K562 (cell line): ENCODE measurements at regions of chr4 and their contacts with region 1.

Region 1: DNA sequence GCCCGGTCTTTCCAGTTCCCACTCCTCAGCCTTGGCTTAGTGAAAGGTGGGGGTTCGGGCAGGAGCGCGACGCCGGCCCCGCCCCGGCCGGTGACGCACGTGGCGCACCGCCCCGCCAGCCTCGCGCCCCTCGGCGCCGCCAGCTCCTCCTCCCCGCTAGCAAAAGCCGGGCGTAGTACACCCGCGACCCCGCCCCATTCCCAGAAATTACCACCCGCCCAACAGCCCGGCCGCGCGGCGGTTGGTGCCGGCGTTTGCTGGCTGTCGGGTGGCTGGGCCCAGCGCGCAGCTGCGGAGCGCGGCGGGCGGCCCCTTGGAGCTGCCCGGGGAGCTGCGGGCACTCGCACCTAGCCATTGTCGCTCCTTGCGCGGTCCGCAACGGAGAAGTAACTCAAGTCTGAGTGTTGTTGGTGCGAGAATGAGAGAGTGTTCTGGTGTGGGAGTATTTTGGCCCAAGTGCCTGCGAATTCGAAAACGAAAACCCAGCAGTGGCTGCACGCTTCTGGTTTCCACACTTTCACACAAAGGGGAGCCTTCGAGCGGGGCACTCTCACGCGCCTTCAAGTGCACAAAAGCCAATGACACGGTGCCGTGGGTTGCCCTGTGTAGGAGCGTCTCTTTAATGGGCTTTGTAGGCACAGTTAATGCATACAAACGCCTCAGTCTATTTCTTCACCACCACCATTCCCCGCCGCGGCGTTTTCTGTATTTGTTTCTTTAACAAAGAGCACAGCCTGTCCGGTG is 1.0 kb upstream of the ELF2 start:
- DNase-seq: peak; percentile 89 to 96 (median 90)
- ATAC-seq: peak; percentile 76
- H3K4me3 ChIP-seq: peak overlapping the region; percentile 98
- H3K27ac ChIP-seq: peak overlapping the region; percentile 98
- H3K4me1 ChIP-seq: peaks cover 17 to 23% of the 10 kb centered on the region in 2 experiments; a peak in 4 of 5 replicates
- H3K27me3 ChIP-seq: no peaks in the 10 kb centered on the region
- CTCF ChIP-seq: no peak
- EP300 ChIP-seq: peak; percentile 63; the same call in 1 of the 2 replicates
- POLR2A ChIP-seq: peak; percentile 93
- RAD21 ChIP-seq: no peak

Region 2: GRCh38 chr4:138494931-138495330 is 683.1 kb before region 1 on chr4:
- CTCF ChIA-PET with region 1: no interaction called
- POLR2A ChIA-PET with region 1: no interaction called
- in situ Hi-C with region 1: no loop called
- intact Hi-C with region 1: no loop called
- DNase-seq: peak in 1 of 4 experiments; percentile 11
- ATAC-seq: peak; percentile 91
- H3K4me3 ChIP-seq: no peak overlapping the region
- H3K27ac ChIP-seq: no peak overlapping the region
- H3K4me1 ChIP-seq: no peaks in the 10 kb centered on the region
- H3K27me3 ChIP-seq: no peaks in the 10 kb centered on the region
- CTCF ChIP-seq: peak; percentile 16 to 26 (median 18); a peak in 2 of 6 replicates
- EP300 ChIP-seq: no peak
- POLR2A ChIP-seq: no peak
- RAD21 ChIP-seq: no peak

Region 3: DNA sequence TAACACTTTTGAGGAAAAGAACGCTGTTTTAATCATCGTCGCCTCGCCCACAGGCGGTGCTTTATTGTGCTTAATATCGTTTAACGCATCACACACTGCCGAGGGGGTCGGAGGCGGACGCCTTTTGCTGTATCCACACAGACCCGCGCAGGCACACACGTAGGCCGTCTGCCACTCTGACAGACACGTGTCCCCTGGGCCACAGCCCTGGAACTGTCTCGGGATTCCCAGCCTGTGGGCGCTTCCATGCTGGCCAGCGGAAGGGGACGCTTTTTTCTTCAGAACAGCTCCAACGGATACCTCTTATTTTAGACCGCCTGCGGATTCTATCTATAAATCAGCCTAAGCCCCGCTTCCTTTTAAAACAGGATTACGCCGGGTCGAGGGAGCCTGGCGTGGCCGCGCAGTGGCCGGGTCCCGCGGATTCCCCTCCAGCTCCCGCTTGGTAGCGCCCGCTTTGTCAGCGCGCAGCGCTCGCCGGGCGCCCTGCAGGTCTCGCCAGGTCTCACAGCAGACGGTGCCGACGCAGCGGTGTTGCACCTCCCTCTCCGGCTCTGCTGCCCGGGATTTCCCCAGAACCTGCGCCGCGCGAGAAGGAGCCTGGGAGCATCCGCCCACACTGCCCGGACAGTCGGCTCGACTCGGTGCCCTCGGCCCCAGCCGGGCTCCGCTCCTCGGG is 162.6 kb before region 1 on chr4 and contains the start of gene NOCT:
- CTCF ChIA-PET with region 1: no interaction called
- POLR2A ChIA-PET with region 1: interaction called, 4 read pairs
- in situ Hi-C with region 1: no loop called
- intact Hi-C with region 1: loop called (anchors 5 kb)
- DNase-seq: peak; percentile 86 to 92 (median 88)
- ATAC-seq: peak; percentile 94
- H3K4me3 ChIP-seq: peak within 1 kb of the TSS; percentile 92
- H3K27ac ChIP-seq: peak within 1 kb of the TSS; percentile 92
- H3K4me1 ChIP-seq: peaks cover 24 to 32% of the 10 kb centered on the region in 2 experiments; a peak in 4 of 5 replicates
- H3K27me3 ChIP-seq: no peaks in the 10 kb centered on the region
- CTCF ChIP-seq: peak in 1 of 3 experiments; percentile 4; a peak in 1 of 6 replicates
- EP300 ChIP-seq: no peak; the same call in 1 of the 2 replicates
- POLR2A ChIP-seq: peak; percentile 91
- RAD21 ChIP-seq: no peak
- polyA plus RNA-seq, gene NOCT: 1.3 to 2.8 TPM

Region 4: GRCh38 chr4:139083956-139084803 is 93.9 kb before region 1 on chr4:
- CTCF ChIA-PET with region 1: no interaction called
- POLR2A ChIA-PET with region 1: interaction called, 3 read pairs
- in situ Hi-C with region 1: no loop called
- intact Hi-C with region 1: loop called (anchors 5 kb)
- DNase-seq: peak; percentile 70 to 92 (median 75)
- ATAC-seq: peak; percentile 72
- H3K4me3 ChIP-seq: peak overlapping the region; percentile 85
- H3K27ac ChIP-seq: peak overlapping the region; percentile 98
- H3K4me1 ChIP-seq: peaks cover 6 to 8% of the 10 kb centered on the region in 2 experiments; a peak in 4 of 5 replicates
- H3K27me3 ChIP-seq: no peaks in the 10 kb centered on the region
- CTCF ChIP-seq: peak in 2 of 3 experiments; percentile 16 to 46; a peak in 2 of 6 replicates
- EP300 ChIP-seq: no peak
- POLR2A ChIP-seq: peak; percentile 85
- RAD21 ChIP-seq: no peak

Region 5: GRCh38 chr4:139099366-139099982 is 78.6 kb before region 1 on chr4:
- CTCF ChIA-PET with region 1: interaction called, 5 read pairs
- POLR2A ChIA-PET with region 1: interaction called, 3 read pairs
- in situ Hi-C with region 1: no loop called
- intact Hi-C with region 1: loop called (anchors 2 kb)
- DNase-seq: peak; percentile 70 to 90 (median 71)
- ATAC-seq: peak; percentile 95
- H3K4me3 ChIP-seq: no peak overlapping the region
- H3K27ac ChIP-seq: no peak overlapping the region
- H3K4me1 ChIP-seq: no peaks in the 10 kb centered on the region; a peak in 1 of 5 replicates
- H3K27me3 ChIP-seq: no peaks in the 10 kb centered on the region
- CTCF ChIP-seq: peak; percentile 81 to 92 (median 84)
- EP300 ChIP-seq: no peak
- POLR2A ChIP-seq: no peak
- RAD21 ChIP-seq: peak; percentile 82 to 91

Region 6: DNA sequence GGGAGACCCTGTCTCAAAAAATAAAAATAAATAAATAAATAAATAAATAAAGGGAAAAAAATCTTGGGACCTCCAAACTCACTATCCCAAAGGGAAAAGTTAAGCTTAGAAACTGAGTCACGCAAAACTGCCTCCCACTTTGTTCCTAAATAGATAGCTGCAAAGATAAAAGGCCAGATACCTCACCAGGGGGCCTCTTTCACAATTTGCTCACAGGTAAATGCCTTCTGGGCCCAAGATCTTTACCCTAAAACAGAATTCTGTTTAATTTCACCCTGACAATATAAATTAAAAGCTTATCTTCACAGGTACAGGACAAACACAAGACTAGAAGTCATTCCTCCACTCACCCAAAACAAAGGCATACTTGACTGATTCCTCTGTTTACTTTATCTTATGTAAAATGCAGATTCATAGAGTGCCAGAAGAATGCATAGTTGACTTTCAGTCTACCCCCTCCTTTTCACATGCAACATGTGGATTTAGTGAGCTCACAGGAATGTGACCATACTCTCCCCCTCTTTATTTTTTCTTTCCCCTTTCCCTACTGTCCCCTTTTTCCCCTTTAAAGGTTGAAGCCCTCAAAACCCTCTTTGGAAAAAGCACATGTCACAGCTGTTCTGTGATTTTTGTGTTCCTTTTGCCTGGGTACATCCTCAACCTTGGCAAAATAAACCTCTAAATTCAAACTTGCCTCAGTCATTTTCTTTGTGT is 24.5 kb before region 1 on chr4:
- CTCF ChIA-PET with region 1: no interaction called
- POLR2A ChIA-PET with region 1: interaction called, 17 read pairs
- in situ Hi-C with region 1: no loop called
- intact Hi-C with region 1: no loop called
- DNase-seq: no peak
- ATAC-seq: peak; percentile 54
- H3K4me3 ChIP-seq: no peak overlapping the region
- H3K27ac ChIP-seq: peak overlapping the region; percentile 55; the same call in 1 of the 3 replicates
- H3K4me1 ChIP-seq: peaks cover 17 to 19% of the 10 kb centered on the region in 2 experiments; a peak in 4 of 5 replicates
- H3K27me3 ChIP-seq: no peaks in the 10 kb centered on the region
- CTCF ChIP-seq: no peak
- EP300 ChIP-seq: no peak
- POLR2A ChIP-seq: no peak
- RAD21 ChIP-seq: no peak

Region 7: GRCh38 chr4:139214039-139214534 is 36.0 kb after region 1 on chr4:
- CTCF ChIA-PET with region 1: no interaction called
- POLR2A ChIA-PET with region 1: interaction called, 4 read pairs
- in situ Hi-C with region 1: no loop called
- intact Hi-C with region 1: loop called (anchors 5 kb)
- DNase-seq: peak in 3 of 4 experiments; percentile 16 to 80 (median 70)
- ATAC-seq: peak; percentile 96
- H3K4me3 ChIP-seq: no peak overlapping the region
- H3K27ac ChIP-seq: peak overlapping the region; percentile 66; the same call in 2 of the 3 replicates
- H3K4me1 ChIP-seq: peaks cover 8 to 21% of the 10 kb centered on the region in 2 experiments
- H3K27me3 ChIP-seq: no peaks in the 10 kb centered on the region
- CTCF ChIP-seq: no peak
- EP300 ChIP-seq: peak; percentile 65
- POLR2A ChIP-seq: no peak
- RAD21 ChIP-seq: no peak

Region 8: GRCh38 chr4:139301113-139301820 is 123.2 kb after region 1 on chr4 and contains the start of gene NAA15:
- CTCF ChIA-PET with region 1: no interaction called
- POLR2A ChIA-PET with region 1: interaction called, 9 read pairs
- in situ Hi-C with region 1: no loop called
- intact Hi-C with region 1: loop called (anchors 2 kb)
- DNase-seq: peak; percentile 94 to 99 (median 96)
- ATAC-seq: peak; percentile 87
- H3K4me3 ChIP-seq: peak within 1 kb of the TSS; percentile 99
- H3K27ac ChIP-seq: peak within 1 kb of the TSS; percentile 98
- H3K4me1 ChIP-seq: peaks cover 11 to 12% of the 10 kb centered on the region in 2 experiments
- H3K27me3 ChIP-seq: no peaks in the 10 kb centered on the region
- CTCF ChIP-seq: no peak
- EP300 ChIP-seq: no peak
- POLR2A ChIP-seq: peak; percentile 94
- RAD21 ChIP-seq: no peak
- polyA plus RNA-seq, gene NAA15: 37.8 to 41.3 TPM

Region 9: DNA sequence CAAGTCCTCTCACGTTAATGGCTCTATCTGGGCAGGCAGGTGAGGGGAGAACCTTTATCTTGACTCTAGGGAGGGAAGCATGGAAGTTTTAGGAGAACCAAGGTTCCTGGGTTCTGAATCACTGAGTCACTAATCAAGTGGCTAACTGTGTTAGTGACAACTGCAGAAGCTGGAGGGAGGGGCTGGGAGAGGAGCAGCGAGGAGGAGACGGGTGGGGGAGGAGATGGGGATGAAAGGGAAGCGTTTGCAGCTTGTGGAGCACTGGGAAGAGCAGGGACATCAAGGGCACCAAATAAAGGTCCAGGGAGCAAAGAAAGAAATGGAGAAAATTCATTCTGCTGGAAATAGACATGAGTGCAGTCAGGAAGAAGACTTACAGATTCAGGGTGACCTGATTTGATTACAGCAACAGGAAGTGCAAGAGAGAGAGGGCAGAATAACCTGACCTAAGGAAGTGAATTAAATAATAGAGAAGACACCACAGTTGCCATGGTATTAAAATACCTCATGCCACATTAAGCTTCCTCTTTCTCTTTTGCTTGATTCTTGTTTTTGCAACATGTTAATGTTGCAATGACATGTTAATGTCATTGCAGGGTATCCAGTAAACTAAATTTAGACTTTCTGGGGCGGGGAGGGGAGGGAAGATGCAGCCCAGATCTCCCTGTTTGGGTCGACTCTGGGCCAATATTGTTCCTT is 382.5 kb after region 1 on chr4:
- CTCF ChIA-PET with region 1: no interaction called
- POLR2A ChIA-PET with region 1: no interaction called
- in situ Hi-C with region 1: no loop called
- intact Hi-C with region 1: no loop called
- DNase-seq: no peak
- ATAC-seq: no peak
- H3K4me3 ChIP-seq: no peak overlapping the region
- H3K27ac ChIP-seq: no peak overlapping the region
- H3K4me1 ChIP-seq: peaks cover 4 to 17% of the 10 kb centered on the region in 2 experiments; a peak in 3 of 5 replicates
- H3K27me3 ChIP-seq: peaks cover 41 to 45% of the 10 kb centered on the region in 2 experiments
- CTCF ChIP-seq: no peak
- EP300 ChIP-seq: no peak
- POLR2A ChIP-seq: no peak
- RAD21 ChIP-seq: no peak

Region 10: GRCh38 chr4:139815778-139816601 is 638.0 kb after region 1 on chr4:
- CTCF ChIA-PET with region 1: no interaction called
- POLR2A ChIA-PET with region 1: no interaction called
- in situ Hi-C with region 1: no loop called
- intact Hi-C with region 1: no loop called
- DNase-seq: peak in 2 of 4 experiments; percentile 17 to 24
- ATAC-seq: peak; percentile 50; the same call in 1 of the 3 replicates
- H3K4me3 ChIP-seq: no peak overlapping the region
- H3K27ac ChIP-seq: no peak overlapping the region
- H3K4me1 ChIP-seq: peaks cover 0 to 3% of the 10 kb centered on the region in 2 experiments; a peak in 1 of 5 replicates
- H3K27me3 ChIP-seq: peaks cover 6 to 27% of the 10 kb centered on the region in 2 experiments; a peak in 4 of 5 replicates
- CTCF ChIP-seq: no peak
- EP300 ChIP-seq: no peak
- POLR2A ChIP-seq: no peak
- RAD21 ChIP-seq: no peak